PC-3 (cell line): ENCODE measurements at regions of chr2 and their contacts with region 1.

Region 1: GRCh38 chr2:50596515-50596914 is 435.4 kb downstream of the NRXN1 start:
- DNase-seq: no peak
- ATAC-seq: no peak
- H3K4me3 ChIP-seq: no peak overlapping the region
- H3K27ac ChIP-seq: no peak overlapping the region
- H3K4me1 ChIP-seq: no peaks in the 10 kb centered on the region
- H3K27me3 ChIP-seq: no peaks in the 10 kb centered on the region
- CTCF ChIP-seq: no peak

Region 2: GRCh38 chr2:50606860-50607259 is 10.3 kb after region 1 on chr2:
- CTCF ChIA-PET with region 1: no interaction called
- POLR2A ChIA-PET with region 1: no interaction called
- intact Hi-C with region 1: loop called (anchors 1 kb)
- DNase-seq: peak; percentile 41
- ATAC-seq: no peak
- H3K4me3 ChIP-seq: no peak overlapping the region
- H3K27ac ChIP-seq: no peak overlapping the region
- H3K4me1 ChIP-seq: no peaks in the 10 kb centered on the region
- H3K27me3 ChIP-seq: no peaks in the 10 kb centered on the region
- CTCF ChIP-seq: peak; percentile 61

Region 3: DNA sequence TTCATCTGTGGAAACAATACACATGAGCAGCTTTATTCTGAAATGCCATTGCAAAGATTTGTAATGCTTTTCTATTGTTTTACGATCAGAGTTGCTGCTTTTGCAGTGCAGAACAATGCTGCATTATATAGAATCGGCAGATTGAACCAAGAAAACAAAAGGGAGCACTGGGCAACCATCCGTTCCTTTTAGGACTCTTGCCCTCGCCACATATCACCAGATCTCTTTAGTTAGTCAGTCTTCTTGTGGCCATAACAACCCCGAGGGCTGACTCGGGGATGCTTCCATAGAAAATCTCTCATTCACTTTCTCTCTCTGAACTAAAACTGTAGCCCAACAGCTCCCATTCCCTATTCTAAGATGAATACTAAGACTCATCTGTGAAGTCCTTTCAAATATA is 95.0 kb after region 1 on chr2:
- CTCF ChIA-PET with region 1: no interaction called
- POLR2A ChIA-PET with region 1: no interaction called
- intact Hi-C with region 1: no loop called
- DNase-seq: no peak
- ATAC-seq: no peak
- H3K4me3 ChIP-seq: no peak overlapping the region
- H3K27ac ChIP-seq: no peak overlapping the region
- H3K4me1 ChIP-seq: no peaks in the 10 kb centered on the region
- H3K27me3 ChIP-seq: peaks cover 4% of the 10 kb centered on the region; the same call in 1 of the 2 replicates
- CTCF ChIP-seq: no peak

Region 4: GRCh38 chr2:50753234-50753633 is 156.7 kb after region 1 on chr2:
- CTCF ChIA-PET with region 1: no interaction called
- POLR2A ChIA-PET with region 1: interaction called, 18 read pairs
- intact Hi-C with region 1: no loop called
- DNase-seq: no peak
- ATAC-seq: no peak
- H3K4me3 ChIP-seq: no peak overlapping the region
- H3K27ac ChIP-seq: no peak overlapping the region
- H3K4me1 ChIP-seq: 0 out of 2 replicates have a peak, but pooled peaks cover 6% of the 10 kb centered on the region
- H3K27me3 ChIP-seq: no peaks in the 10 kb centered on the region
- CTCF ChIP-seq: no peak